Activated CD8-positive, alpha-beta T cell treated with anti-CD3 and anti-CD28 coated beads for 36 hours (primary cell): ENCODE measurements at regions of chr5 and their contacts with region 1.

Region 1: GRCh38 chr5:94524841-94525697 is 93.3 kb downstream of the KIAA0825 start:
- DNase-seq: peak; percentile 36
- ATAC-seq: peak; percentile 71
- H3K4me3 Mint-ChIP-seq: no peak overlapping the region
- H3K27ac Mint-ChIP-seq: no peak overlapping the region
- H3K4me1 Mint-ChIP-seq: no peaks in the 10 kb centered on the region
- H3K27me3 Mint-ChIP-seq: no peaks in the 10 kb centered on the region
- CTCF ChIP-seq: peak; percentile 28

Region 2: DNA sequence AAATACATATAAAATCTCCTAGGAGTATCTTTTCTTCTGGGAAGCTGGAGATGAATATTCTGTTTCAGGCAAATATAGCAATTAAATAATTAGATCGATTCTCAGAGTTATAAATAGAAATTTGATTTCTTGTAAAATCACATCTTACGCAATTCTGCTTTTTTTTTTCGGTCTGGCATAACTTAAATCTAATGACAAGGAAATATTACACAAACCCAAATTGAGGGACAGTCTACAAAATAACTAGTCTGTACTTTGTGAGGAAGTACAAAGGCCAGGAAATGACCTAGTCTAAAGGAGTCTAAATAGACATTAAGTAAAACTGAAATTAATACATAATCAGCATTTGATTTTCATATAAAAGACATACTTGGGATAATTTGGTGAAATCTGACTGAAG is 40.0 kb before region 1 on chr5:
- CTCF ChIA-PET with region 1: no interaction called
- POLR2A ChIA-PET with region 1: no interaction called
- intact Hi-C with region 1: no loop called
- DNase-seq: no peak
- ATAC-seq: no peak
- H3K4me3 Mint-ChIP-seq: no peak overlapping the region
- H3K27ac Mint-ChIP-seq: no peak overlapping the region
- H3K4me1 Mint-ChIP-seq: no peaks in the 10 kb centered on the region
- H3K27me3 Mint-ChIP-seq: no peaks in the 10 kb centered on the region
- CTCF ChIP-seq: no peak

Region 3: DNA sequence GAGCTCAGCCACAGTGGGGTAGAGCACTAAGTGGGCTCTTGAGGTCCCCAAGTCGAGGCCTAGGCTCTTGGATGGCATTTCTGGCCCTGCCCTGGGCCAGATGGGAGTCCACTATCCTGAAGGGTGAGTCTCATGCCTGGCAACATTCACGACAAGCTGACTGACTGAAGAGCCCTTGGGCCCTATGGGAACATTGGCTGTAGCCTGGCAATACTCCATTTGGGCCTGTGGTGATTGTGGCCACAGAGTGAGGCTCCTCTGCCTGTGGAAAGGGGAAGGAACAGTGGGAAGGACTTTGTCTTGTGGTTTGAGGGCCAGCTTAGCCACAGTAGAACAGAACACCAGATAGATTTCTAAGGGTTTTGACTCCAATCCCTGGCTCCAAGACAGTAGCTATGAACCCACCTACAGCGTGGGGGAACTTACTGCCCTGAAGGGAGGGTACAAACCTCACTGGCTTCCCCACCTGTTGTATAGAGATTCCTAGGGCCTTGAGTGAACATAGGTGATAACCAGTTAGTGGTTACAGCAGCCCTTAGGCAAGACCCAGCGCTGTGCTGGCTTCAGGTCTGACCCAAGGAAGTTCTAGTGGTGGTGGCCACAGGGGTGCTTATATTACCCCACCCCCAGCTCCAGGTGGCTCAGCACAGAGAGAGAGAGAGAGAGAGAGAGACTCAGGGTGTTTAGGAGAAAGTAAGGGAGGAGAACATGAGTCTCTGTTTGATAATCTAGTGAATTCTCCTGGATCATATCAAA is 21.0 kb after region 1 on chr5:
- CTCF ChIA-PET with region 1: no interaction called
- POLR2A ChIA-PET with region 1: no interaction called
- intact Hi-C with region 1: no loop called
- DNase-seq: no peak
- ATAC-seq: no peak
- H3K4me3 Mint-ChIP-seq: no peak overlapping the region
- H3K27ac Mint-ChIP-seq: no peak overlapping the region
- H3K4me1 Mint-ChIP-seq: no peaks in the 10 kb centered on the region
- H3K27me3 Mint-ChIP-seq: no peaks in the 10 kb centered on the region
- CTCF ChIP-seq: no peak

Region 4: DNA sequence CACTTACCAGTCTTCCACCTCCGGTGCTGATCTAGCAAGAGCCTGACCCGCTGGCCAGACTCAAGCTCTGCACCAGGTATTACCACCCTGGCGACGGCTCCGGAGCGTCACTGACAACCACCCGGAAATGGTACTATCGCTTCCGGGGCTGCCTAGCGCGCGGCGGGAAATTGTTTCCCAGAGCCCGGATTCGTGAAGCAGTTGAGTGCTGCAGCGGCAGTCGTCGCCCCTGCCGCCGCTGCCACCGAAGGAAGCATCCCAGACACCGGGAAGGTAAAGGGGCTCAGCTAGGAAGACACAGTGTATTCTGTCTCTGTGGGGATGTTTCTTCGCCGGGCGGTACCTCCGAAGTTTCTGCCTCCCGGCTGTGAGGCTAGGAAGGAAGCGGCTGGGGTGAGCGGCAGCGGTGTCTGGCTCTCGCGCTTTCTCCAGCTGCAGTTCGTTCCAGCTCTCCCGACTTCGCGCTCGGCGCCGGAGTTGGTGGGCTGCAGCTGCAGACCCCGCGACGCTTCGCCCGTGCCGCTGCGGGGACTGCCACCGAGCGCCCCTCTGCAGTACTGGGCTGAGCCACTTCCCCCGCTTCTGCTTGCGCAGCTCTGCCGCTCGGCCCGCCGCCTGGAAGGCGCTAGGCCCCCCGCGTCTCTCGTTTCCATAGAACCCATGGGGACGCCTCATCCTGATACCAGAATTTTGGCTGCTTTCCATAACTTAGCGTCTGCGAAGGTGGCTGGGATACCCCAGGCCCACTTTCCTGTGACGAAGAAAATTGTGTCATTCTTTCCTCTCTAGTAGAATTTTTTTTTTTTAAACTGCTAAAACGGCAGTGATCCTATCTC is 93.6 kb after region 1 on chr5 and contains the starts of genes KIAA0825 and SLF1:
- CTCF ChIA-PET with region 1: no interaction called
- POLR2A ChIA-PET with region 1: no interaction called
- intact Hi-C with region 1: loop called (anchors 10 kb)
- DNase-seq: peak; percentile 93
- ATAC-seq: peak; percentile 88
- H3K4me3 Mint-ChIP-seq: peak within 1 kb of the TSS; percentile 81
- H3K27ac Mint-ChIP-seq: peak within 1 kb of the TSS; percentile 84
- H3K4me1 Mint-ChIP-seq: peaks cover 34% of the 10 kb centered on the region
- H3K27me3 Mint-ChIP-seq: no peaks in the 10 kb centered on the region
- CTCF ChIP-seq: no peak
- total RNA-seq, gene KIAA0825: 0.32 to 0.54 TPM
- total RNA-seq, gene SLF1: 11.5 to 14.5 TPM

Region 5: DNA sequence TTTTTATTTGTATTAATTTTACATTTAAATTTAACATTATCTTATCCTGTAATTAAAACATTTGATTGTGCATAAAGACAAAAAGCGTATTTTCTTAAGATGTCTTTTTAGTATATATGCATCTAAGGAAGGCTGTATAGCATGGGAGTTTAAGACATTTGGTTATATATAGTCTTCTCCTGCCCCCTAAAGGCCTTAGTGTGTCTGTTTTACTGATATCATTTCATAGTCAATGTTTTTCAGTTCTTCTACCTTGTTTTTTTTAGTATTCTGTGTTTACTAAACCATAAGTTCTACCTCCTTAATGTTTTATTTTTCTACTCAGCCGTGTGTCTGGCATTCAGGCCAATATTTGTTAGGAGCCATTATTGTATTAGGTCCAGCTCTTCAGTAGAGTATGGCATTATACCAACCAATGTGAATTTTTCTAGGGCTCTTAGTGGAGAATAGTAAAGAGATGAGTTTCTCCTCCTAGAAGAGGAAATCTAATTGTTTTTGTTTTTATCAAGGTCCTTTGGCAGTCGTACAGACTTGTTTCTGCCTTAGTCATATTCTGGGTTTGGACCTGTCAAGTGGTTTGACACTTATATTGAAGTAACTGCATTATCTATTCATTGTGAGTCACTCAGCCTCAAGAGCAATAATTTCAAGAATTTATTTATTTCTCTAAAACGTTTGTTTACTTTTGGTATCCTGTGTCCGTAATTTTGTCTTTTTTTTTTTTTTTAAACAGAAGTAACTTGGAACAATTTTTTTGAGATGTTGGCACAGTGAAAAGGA is 168.2 kb after region 1 on chr5:
- CTCF ChIA-PET with region 1: interaction called, 3 read pairs
- POLR2A ChIA-PET with region 1: no interaction called
- intact Hi-C with region 1: loop called (anchors 10 kb)
- DNase-seq: no peak
- ATAC-seq: peak; percentile 47
- H3K4me3 Mint-ChIP-seq: no peak overlapping the region
- H3K27ac Mint-ChIP-seq: no peak overlapping the region
- H3K4me1 Mint-ChIP-seq: peaks cover 2% of the 10 kb centered on the region
- H3K27me3 Mint-ChIP-seq: no peaks in the 10 kb centered on the region
- CTCF ChIP-seq: no peak

Region 6: DNA sequence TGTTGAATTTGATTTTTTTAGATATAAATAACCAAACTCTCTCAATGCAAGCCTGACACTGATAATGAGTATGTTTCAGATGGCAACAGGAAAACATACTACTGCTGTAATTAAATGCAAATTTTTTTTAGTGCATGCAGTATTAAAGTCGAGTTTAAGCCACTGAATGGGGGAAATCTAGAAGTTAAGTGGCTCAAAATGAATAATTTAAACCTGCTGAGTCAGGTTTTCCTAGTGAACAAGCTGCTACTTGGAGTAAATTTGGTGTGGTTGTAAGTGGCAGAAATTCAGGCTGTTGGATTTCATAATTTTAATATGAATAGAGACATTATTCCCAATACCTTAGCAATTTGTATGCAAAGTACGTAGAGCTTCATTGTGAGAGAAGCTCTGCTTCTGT is 215.2 kb after region 1 on chr5:
- CTCF ChIA-PET with region 1: interaction called, 48 read pairs
- POLR2A ChIA-PET with region 1: no interaction called
- intact Hi-C with region 1: loop called (anchors 2 kb)
- DNase-seq: no peak
- ATAC-seq: no peak
- H3K4me3 Mint-ChIP-seq: no peak overlapping the region
- H3K27ac Mint-ChIP-seq: no peak overlapping the region
- H3K4me1 Mint-ChIP-seq: no peaks in the 10 kb centered on the region
- H3K27me3 Mint-ChIP-seq: no peaks in the 10 kb centered on the region
- CTCF ChIP-seq: no peak

Region 7: DNA sequence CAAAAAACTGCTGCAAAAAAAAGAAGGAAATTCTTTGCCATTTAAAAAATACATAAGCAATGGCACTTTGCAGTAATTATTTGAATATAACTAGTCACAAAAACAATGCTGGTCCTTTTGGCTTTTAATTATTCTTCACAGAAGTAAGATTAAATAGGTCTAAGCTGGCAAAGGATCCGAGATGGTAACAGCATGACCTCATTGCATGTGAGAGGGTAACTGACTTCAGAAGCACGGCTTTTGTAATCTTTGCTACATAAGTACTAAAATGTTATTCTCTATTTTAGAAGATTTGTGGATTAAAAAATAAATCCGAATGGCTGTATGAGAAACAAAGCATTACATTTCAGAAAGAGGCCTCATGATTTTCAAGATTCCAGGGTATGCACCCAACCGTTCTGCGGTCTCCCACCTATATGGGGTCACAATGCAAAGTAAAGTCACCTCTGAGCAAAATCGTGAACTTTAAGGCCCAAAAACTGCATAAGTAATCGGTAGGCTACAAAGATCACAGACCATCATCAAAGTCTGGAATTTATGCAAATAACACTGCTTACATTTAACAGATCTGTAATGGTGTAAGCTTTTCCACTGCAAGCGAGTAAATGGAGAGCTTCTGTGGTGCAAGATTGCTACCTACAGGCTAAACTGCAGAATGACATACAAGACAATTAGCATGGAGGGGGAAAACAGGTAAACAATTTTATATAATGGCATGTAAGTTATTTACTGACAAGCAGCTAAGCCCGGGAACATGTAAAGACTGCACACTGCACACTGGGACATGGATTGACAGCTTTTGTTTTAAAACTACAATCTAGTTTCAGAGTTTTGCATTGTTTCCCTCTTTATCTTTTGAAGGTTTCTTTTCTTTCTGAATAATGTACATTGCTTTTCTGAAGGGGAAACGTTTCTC is 325.0 kb after region 1 on chr5:
- CTCF ChIA-PET with region 1: interaction called, 12 read pairs
- POLR2A ChIA-PET with region 1: no interaction called
- intact Hi-C with region 1: no loop called
- DNase-seq: peak; percentile 31
- ATAC-seq: peak; percentile 95
- H3K4me3 Mint-ChIP-seq: no peak overlapping the region
- H3K27ac Mint-ChIP-seq: no peak overlapping the region
- H3K4me1 Mint-ChIP-seq: peaks cover 12% of the 10 kb centered on the region
- H3K27me3 Mint-ChIP-seq: peaks cover 3% of the 10 kb centered on the region
- CTCF ChIP-seq: peak; percentile 80